ENCODE measurements at regions of chr12 and their contacts with region 1.

Region 1: DNA sequence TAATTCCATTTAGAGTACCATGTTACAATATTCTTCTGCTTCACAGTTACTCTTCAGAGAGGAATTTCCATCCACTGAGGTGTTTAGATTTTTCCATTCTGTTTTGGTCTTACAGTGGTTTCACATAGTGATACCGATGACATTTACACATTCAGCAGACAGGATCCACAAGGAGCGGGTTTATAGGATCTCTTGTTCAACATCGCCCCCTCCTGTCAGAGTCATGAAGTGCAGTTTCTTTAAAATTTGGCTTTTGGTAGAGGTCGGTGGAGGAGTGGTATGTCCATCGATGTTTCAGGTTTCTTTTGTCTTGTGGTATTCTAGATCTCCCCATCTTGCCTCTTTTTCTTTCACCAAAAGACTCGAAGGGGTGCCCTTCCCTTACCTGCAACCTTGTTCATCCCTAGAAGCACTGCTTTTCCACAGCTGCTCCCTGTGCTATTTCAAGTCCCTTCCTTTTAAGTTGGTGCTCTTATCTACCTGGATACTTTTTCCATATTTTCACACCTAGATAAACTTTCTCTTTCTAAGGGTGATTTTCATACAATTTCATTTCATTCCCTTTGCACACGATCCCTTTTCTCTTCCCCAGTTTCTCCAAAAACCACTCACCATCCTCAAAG is 181.3 kb downstream of the ITPR2 start:
- DNase-seq: peak; percentile 18
- H3K4me3 Mint-ChIP-seq: no peak overlapping the region
- H3K27ac Mint-ChIP-seq: no peak overlapping the region
- H3K4me1 Mint-ChIP-seq: peaks cover 5% of the 10 kb centered on the region
- H3K27me3 Mint-ChIP-seq: no peaks in the 10 kb centered on the region

Region 2: GRCh38 chr12:26121323-26122060 is 530.2 kb before region 1 on chr12:
- intact Hi-C with region 1: loop called (anchors 2 kb)
- DNase-seq: no peak
- H3K4me3 Mint-ChIP-seq: peak overlapping the region; percentile 54
- H3K27ac Mint-ChIP-seq: no peak overlapping the region
- H3K4me1 Mint-ChIP-seq: peaks cover 22% of the 10 kb centered on the region
- H3K27me3 Mint-ChIP-seq: peaks cover 76% of the 10 kb centered on the region

Measured in activated T-helper 2 cell treated with anti-CD3 and anti-CD28 coated beads, Interferon-gamma antibody, Interleukin-2, Interleukin-4, amounts not matched to agents 10 μg/mL and 5 μg/mL and 100 μg/mL, durations not matched to agents 14 hours and 24 hours and 36 hours (primary cell).